ENCODE measurements at regions of chr14 and their contacts with region 1.

Region 1: DNA sequence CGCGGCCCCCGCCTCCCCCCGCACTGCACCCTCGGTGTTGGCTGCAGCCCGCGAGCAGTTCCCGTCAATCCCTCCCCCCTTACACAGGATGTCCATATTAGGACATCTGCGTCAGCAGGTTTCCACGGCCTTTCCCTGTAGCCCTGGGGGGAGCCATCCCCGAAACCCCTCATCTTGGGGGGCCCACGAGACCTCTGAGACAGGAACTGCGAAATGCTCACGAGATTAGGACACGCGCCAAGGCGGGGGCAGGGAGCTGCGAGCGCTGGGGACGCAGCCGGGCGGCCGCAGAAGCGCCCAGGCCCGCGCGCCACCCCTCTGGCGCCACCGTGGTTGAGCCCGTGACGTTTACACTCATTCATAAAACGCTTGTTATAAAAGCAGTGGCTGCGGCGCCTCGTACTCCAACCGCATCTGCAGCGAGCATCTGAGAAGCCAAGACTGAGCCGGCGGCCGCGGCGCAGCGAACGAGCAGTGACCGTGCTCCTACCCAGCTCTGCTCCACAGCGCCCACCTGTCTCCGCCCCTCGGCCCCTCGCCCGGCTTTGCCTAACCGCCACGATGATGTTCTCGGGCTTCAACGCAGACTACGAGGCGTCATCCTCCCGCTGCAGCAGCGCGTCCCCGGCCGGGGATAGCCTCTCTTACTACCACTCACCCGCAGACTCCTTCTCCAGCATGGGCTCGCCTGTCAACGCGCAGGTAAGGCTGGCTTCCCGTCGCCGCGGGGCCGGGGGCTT is at the start of gene FOS:
- DNase-seq: peak in 1 of 2 donors; percentile 97
- H3K4me3 ChIP-seq: peak within 1 kb of the TSS; percentile 87 to 88
- H3K27ac ChIP-seq: peak within 1 kb of the TSS; percentile 99
- H3K4me1 ChIP-seq: peaks cover 53% of the 10 kb centered on the region
- H3K27me3 ChIP-seq: no peaks in the 10 kb centered on the region
- CTCF ChIP-seq: no peak
- POLR2A ChIP-seq: peak in 1 of 2 donors; percentile 99
- total RNA-seq, gene FOS: 884 TPM

Region 2: DNA sequence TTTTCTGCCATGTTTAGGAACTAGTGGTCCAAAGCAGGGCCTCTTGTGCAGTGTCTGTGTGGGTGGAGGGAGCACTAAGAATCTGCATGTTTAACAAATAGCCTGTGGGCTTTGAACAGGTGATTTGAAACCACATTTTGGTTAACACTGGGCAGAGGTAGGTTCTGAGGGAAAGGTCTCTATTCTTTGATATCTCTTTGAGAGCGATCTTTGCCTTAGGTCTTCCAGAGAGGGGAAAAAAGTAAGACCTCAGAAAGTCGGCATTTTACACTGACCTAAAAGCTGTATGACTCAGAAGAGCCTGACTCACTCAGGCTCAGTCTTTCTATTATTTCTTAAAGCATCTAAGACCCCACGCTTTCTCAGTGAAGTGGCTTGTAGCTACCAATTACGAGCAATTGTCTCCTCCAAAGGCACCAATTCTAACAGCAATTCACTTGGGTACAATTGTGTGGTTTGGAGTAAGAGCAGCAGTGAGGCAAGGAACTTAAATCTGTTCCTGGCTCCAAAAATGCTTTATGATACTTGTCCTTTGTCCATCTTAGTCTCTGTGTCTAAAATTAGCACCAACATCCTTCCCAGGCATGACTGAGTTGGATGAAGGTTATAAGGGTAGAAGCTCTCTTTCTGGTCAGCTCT is 267.1 kb before region 1 on chr14:
- intact Hi-C with region 1: no loop called
- DNase-seq: no peak
- H3K4me3 ChIP-seq: no peak overlapping the region
- H3K27ac ChIP-seq: peak overlapping the region; percentile 60
- H3K4me1 ChIP-seq: peaks cover 8% of the 10 kb centered on the region
- H3K27me3 ChIP-seq: no peaks in the 10 kb centered on the region
- CTCF ChIP-seq: no peak
- POLR2A ChIP-seq: no peak

Region 3: DNA sequence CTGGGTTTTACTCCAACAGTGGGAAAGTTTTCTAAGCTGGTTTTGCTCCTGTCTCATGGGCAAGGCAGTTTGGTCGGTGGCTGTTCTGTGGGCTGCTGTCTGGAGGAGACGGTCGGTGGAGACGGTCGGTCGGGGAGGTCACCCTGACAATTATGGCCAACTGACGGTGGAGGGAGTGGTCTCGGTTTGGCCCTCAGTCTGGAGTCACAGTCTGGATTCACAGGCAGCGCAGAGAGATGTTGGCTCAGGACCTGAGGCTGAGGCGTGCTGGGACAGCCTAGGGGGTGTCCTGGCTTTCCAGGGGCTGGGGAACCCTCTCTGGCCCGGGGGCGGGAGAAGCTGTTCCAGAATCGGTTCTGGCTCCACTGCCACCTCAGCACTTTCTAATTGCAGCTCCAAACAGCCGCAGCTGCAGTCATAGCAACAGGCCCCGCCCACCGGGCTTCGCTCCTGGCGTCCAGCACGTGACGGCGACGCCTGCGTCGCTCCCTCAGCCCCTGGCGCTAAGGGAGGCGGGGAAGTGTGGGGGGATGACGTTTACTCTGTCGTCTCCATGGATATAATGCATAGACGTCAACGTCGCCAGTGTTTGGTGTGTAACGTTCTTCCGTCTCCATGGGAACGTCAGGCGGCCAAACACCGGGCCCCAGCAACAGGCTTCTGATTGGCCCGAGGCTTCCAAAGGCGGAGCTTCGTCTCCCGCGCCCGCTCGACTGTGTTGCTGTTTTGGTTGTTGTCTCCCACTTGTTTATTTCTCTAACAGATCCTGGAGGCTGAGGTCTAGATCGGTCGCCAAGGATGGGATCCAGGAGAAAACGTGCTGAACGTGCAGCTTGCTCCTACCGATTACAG is 19.8 kb before region 1 on chr14:
- intact Hi-C with region 1: loop called (anchors 1 kb)
- DNase-seq: peak; percentile 99 to 100
- H3K4me3 ChIP-seq: peak overlapping the region; percentile 52
- H3K27ac ChIP-seq: peak overlapping the region; percentile 94
- H3K4me1 ChIP-seq: peaks cover 45% of the 10 kb centered on the region
- H3K27me3 ChIP-seq: no peaks in the 10 kb centered on the region
- CTCF ChIP-seq: no peak
- POLR2A ChIP-seq: peak in 1 of 2 donors; percentile 51

Region 4: GRCh38 chr14:75293920-75294642 is 15.5 kb after region 1 on chr14:
- intact Hi-C with region 1: loop called (anchors 2 kb)
- DNase-seq: peak in 1 of 2 donors; percentile 97
- H3K4me3 ChIP-seq: peak overlapping the region; percentile 61 to 78
- H3K27ac ChIP-seq: peak overlapping the region; percentile 96
- H3K4me1 ChIP-seq: peaks cover 34% of the 10 kb centered on the region
- H3K27me3 ChIP-seq: no peaks in the 10 kb centered on the region
- CTCF ChIP-seq: no peak
- POLR2A ChIP-seq: peak in 1 of 2 donors; percentile 35

Measured in vagina (tissue), 2 donors.